PC-9 (cell line): ENCODE measurements at regions of chr22 and their contacts with region 1.

Region 1: GRCh38 chr22:40346178-40347118 is at the start of gene ADSL:
- DNase-seq: peak; percentile 77 to 84
- H3K4me3 ChIP-seq: peak within 1 kb of the TSS; percentile 79
- H3K27ac ChIP-seq: peak within 1 kb of the TSS; percentile 87
- H3K4me1 ChIP-seq: peaks cover 14% of the 10 kb centered on the region
- H3K27me3 ChIP-seq: no peaks in the 10 kb centered on the region
- CTCF ChIP-seq: no peak
- total RNA-seq, gene ADSL: 56.2 and 66.2 TPM in 2 replicates

Region 2: DNA sequence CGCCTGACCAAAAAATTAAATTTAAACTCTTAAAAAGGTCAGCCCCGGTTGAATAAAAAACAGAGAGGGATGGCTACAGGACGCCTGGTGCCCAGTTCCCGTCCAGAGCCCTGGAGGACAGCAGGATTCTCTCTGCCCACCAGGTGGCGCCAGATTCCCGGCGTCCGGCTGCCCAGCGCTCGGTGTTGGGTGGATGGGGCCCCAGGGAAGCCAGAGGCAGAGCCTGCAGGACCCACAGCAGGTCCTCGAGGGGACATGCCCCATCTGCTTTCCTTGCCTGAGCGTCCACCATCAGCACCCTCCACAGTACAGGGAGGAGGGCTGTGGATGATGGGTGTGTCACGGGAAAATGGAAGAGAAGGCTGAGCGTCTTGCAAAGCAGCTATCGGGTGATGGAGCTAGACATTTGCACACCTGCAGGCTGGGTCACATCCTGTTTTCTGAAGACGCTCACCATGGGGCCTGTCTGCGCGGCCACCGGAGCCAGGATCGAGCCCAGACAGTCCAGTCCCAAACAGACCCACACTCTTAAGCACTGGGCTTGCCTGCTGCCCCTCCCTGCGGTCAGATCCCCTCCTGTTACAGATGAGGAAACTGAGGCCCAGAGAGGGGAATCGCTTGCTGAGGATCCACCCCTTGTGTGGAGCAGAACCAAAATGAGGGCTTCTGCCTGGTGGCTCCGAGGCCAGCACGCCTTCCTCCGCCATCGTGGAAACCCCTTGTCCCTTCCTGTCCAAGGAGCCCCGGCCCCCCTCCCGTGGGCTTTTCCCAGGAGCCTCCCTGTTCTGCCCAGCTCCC is 1175.4 kb before region 1 on chr22:
- CTCF ChIA-PET with region 1: no interaction called
- POLR2A ChIA-PET with region 1: no interaction called
- intact Hi-C with region 1: loop called (anchors 5 kb)
- DNase-seq: peak; percentile 53 to 91
- H3K4me3 ChIP-seq: no peak overlapping the region
- H3K27ac ChIP-seq: no peak overlapping the region
- H3K4me1 ChIP-seq: peaks cover 50% of the 10 kb centered on the region
- H3K27me3 ChIP-seq: no peaks in the 10 kb centered on the region
- CTCF ChIP-seq: peak; percentile 100

Region 3: GRCh38 chr22:39532215-39533071 is 814.0 kb before region 1 on chr22 and contains the start of gene RPS19BP1:
- CTCF ChIA-PET with region 1: no interaction called
- POLR2A ChIA-PET with region 1: no interaction called
- intact Hi-C with region 1: loop called (anchors 2 kb)
- DNase-seq: peak; percentile 100
- H3K4me3 ChIP-seq: peak within 1 kb of the TSS; percentile 87
- H3K27ac ChIP-seq: peak within 1 kb of the TSS; percentile 30
- H3K4me1 ChIP-seq: peaks cover 44% of the 10 kb centered on the region
- H3K27me3 ChIP-seq: no peaks in the 10 kb centered on the region
- CTCF ChIP-seq: peak; percentile 24; the same call in 1 of the 2 replicates
- total RNA-seq, gene RPS19BP1: 60.7 and 94.3 TPM in 2 replicates

Region 4: DNA sequence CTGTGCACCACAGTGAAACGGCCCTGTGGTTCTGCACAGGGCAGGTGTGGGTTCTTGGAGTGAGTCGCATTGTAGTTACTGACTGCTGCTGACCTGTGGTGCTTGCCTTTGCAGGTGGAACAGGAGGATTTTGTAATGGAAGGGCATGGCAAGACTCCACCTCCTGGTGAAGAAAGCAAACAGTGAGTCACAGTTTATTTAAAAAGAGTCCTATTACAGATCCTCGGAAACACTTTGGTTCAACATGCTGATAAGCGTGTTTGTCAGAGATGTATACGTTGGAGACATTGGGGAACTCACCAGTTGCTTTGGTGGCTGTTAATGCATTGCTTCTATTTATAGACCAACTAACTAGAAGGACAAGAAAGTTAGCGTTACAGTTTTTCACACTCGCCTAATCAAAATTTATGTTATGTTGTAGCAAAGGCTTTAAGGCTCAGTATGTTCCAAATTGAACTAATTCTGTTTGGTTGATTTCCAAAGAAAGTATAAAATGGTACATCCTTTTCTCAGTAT is 190.4 kb before region 1 on chr22:
- CTCF ChIA-PET with region 1: no interaction called
- POLR2A ChIA-PET with region 1: interaction called, 32 read pairs
- intact Hi-C with region 1: no loop called
- DNase-seq: peak; percentile 68 to 98
- H3K4me3 ChIP-seq: peak overlapping the region; percentile 0; the same call in 1 of the 2 replicates
- H3K27ac ChIP-seq: peak overlapping the region; percentile 36
- H3K4me1 ChIP-seq: peaks cover 26% of the 10 kb centered on the region
- H3K27me3 ChIP-seq: no peaks in the 10 kb centered on the region
- CTCF ChIP-seq: peak; percentile 54; the same call in 1 of the 2 replicates

Region 5: DNA sequence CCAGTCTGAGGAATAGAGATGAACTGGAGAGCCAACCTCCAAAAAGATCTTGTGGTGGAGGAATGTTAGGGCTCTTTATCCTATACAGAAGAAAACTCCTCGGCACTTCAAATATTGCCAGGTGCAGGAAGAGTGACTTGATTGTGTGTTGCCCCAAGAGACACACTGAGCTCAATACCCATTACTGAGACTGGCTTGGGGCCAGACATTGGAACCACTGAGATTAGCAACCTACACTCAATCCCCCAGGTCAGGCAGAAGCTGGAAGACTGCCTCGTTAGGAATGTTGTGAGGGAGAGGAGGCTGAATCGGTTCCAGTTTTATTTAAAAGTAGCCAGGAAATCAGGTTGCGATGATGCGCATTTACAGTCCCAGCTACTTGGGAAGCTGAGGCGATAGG is 21.6 kb after region 1 on chr22:
- CTCF ChIA-PET with region 1: interaction called, 3 read pairs
- POLR2A ChIA-PET with region 1: interaction called, 49 read pairs
- intact Hi-C with region 1: no loop called
- DNase-seq: no peak
- H3K4me3 ChIP-seq: no peak overlapping the region
- H3K27ac ChIP-seq: 0 out of 2 replicates have a peak overlapping the region, but pooled peaks have one; percentile 33
- H3K4me1 ChIP-seq: peaks cover 11% of the 10 kb centered on the region; the same call in 1 of the 2 replicates
- H3K27me3 ChIP-seq: no peaks in the 10 kb centered on the region
- CTCF ChIP-seq: no peak

Region 6: GRCh38 chr22:40671369-40671768 is 324.9 kb after region 1 on chr22:
- CTCF ChIA-PET with region 1: interaction called, 11 read pairs
- POLR2A ChIA-PET with region 1: no interaction called
- intact Hi-C with region 1: no loop called
- DNase-seq: no peak
- H3K4me3 ChIP-seq: no peak overlapping the region
- H3K27ac ChIP-seq: no peak overlapping the region
- H3K4me1 ChIP-seq: peaks cover 11% of the 10 kb centered on the region
- H3K27me3 ChIP-seq: no peaks in the 10 kb centered on the region
- CTCF ChIP-seq: no peak